ENCODE measurements at regions of chr7 and their contacts with region 1.

Region 1: DNA sequence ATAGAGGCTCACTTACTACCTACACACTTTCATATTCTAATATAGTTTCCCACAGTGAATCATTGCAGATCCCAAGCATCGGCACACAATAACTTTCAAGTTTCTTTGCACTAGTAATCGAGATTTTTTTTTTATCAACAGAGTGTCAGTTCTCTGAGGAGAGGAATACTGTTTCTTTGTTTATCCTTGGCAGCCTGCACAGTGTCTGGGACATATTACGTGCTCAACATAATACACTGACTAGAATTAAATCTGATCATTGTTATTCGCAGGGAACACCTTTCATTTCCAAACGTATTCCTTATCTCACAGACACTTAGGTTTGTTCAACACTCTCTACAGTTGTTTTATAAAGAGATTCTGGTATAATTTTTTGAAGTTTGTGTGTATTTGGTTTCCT is 95.3 kb downstream of the CACNA2D1 start:
- DNase-seq: no peak
- H3K4me3 ChIP-seq: no peak overlapping the region
- H3K27ac ChIP-seq: peak overlapping the region in 1 of 2 experiments; percentile 53; a peak in 2 of 4 replicates
- H3K4me1 ChIP-seq: peaks cover 0 to 22% of the 10 kb centered on the region in 2 experiments; a peak in 3 of 4 replicates
- H3K27me3 ChIP-seq: no peaks in the 10 kb centered on the region
- CTCF ChIP-seq: no peak
- EP300 ChIP-seq: no peak
- RAD21 ChIP-seq: no peak

Region 2: DNA sequence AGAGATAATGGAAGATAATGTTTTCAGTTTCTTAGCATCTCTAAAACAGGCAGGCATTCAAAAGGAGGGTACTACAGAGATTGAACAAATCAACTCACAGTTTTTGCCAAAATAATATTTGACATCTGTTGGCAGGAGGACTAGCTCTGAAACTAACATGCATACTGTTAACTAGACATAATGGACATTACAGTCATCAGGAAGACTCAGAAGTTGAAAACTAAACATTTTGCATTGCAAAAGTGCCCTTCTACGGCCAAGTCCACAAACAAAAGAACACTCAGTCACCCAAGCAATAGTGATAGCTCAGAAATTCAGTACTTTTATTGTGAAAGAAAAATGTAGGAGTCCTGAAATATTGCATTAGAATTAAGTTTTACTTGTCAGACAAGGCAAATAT is 977.4 kb before region 1 on chr7:
- CTCF ChIA-PET with region 1: no interaction called
- POLR2A ChIA-PET with region 1: no interaction called
- DNase-seq: no peak
- H3K4me3 ChIP-seq: no peak overlapping the region
- H3K27ac ChIP-seq: no peak overlapping the region
- H3K4me1 ChIP-seq: peaks cover 0 to 6% of the 10 kb centered on the region in 2 experiments; a peak in 2 of 4 replicates
- H3K27me3 ChIP-seq: no peaks in the 10 kb centered on the region
- CTCF ChIP-seq: no peak
- EP300 ChIP-seq: no peak
- RAD21 ChIP-seq: no peak

Region 3: GRCh38 chr7:82359426-82359825 is 11.2 kb after region 1 on chr7:
- CTCF ChIA-PET with region 1: interaction called, 16 read pairs
- POLR2A ChIA-PET with region 1: no interaction called
- DNase-seq: no peak
- H3K4me3 ChIP-seq: no peak overlapping the region
- H3K27ac ChIP-seq: no peak overlapping the region
- H3K4me1 ChIP-seq: peaks cover 0 to 13% of the 10 kb centered on the region in 2 experiments; a peak in 2 of 4 replicates
- H3K27me3 ChIP-seq: no peaks in the 10 kb centered on the region
- CTCF ChIP-seq: no peak
- EP300 ChIP-seq: no peak
- RAD21 ChIP-seq: peak; percentile 45; the same call in 1 of the 2 replicates

Region 4: GRCh38 chr7:82699773-82700186 is 351.5 kb after region 1 on chr7:
- CTCF ChIA-PET with region 1: no interaction called
- POLR2A ChIA-PET with region 1: no interaction called
- DNase-seq: no peak
- H3K4me3 ChIP-seq: no peak overlapping the region
- H3K27ac ChIP-seq: no peak overlapping the region
- H3K4me1 ChIP-seq: peaks cover 3 to 35% of the 10 kb centered on the region in 2 experiments; a peak in 2 of 4 replicates
- H3K27me3 ChIP-seq: no peaks in the 10 kb centered on the region
- CTCF ChIP-seq: no peak
- EP300 ChIP-seq: peak in 1 of 2 experiments; percentile 46; a peak in 2 of 4 replicates
- RAD21 ChIP-seq: no peak

Measured in SK-N-SH (cell line).